K562 (cell line): ENCODE measurements at regions of chr1 and their contacts with region 1.

Region 1: DNA sequence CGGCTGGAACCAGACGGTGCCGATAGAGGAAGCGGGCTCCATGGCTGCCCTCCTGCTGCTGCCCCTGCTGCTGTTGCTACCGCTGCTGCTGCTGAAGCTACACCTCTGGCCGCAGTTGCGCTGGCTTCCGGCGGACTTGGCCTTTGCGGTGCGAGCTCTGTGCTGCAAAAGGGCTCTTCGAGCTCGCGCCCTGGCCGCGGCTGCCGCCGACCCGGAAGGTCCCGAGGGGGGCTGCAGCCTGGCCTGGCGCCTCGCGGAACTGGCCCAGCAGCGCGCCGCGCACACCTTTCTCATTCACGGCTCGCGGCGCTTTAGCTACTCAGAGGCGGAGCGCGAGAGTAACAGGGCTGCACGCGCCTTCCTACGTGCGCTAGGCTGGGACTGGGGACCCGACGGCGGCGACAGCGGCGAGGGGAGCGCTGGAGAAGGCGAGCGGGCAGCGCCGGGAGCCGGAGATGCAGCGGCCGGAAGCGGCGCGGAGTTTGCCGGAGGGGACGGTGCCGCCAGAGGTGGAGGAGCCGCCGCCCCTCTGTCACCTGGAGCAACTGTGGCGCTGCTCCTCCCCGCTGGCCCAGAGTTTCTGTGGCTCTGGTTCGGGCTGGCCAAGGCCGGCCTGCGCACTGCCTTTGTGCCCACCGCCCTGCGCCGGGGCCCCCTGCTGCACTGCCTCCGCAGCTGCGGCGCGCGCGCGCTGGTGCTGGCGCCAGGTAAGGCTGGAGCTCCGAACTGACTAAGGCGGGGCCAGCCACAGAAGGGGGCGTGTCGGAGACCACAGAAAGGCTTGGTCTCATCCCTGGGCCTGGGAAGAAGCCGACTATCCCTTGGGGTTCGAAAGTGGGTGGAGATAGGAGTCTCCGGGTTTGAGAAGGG is 486 bp downstream of the SLC27A3 start:
- DNase-seq: peak in 3 of 4 experiments; percentile 66 to 77 (median 73)
- ATAC-seq: peak; percentile 73
- H3K4me3 ChIP-seq: peak overlapping the region; percentile 48
- H3K27ac ChIP-seq: no peak overlapping the region
- H3K4me1 ChIP-seq: peaks cover 10 to 55% of the 10 kb centered on the region in 2 experiments
- H3K27me3 ChIP-seq: no peaks in the 10 kb centered on the region
- CTCF ChIP-seq: no peak
- EP300 ChIP-seq: no peak
- POLR2A ChIP-seq: no peak
- RAD21 ChIP-seq: no peak

Region 2: DNA sequence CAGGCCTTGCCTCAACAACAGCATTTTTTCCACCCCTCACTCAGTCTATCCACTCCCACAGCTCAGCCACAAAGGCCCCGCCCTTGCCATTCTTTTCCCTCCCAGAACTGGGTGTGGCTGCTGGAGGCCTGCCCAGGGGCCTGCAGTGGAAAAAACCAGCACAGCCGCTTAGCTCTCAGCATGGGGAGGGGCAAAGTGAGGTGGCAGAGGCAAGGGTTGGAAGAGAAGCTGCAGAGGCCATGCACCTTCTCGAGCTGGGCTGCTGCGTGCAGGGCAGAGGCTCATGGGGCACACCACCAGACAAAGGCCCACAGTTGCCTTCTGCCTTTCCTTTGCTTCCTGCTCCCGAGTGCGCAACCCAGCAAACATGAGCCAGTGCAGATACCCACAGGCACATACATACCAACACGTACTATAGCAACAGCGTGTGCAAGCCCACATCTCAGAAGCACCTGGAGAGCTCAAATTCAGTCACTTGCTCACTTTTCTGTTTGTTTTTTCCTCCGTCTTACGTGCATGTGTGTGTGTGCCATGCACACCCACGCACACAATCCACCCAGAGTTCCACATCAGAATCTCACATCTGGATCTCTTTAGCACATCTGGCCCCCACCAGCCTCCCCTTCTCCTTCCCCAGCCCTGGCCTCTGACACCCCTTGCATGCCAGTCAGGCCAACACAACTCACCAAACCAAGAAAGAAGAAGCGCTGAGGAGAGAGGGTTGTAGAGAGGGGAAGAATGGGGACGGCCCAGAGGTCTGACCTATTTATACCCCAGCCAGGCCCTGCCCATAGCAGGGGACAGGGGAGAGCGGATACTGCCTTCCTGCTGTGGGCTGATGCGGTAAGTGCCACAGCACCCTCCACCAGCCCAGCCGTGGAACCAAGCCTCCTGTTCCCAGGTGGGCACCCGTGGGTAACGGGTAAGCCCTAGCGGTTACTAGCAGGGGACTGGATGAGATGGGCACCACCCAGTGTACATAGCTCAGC is 230.3 kb before region 1 on chr1 and contains the start of gene S100A4:
- CTCF ChIA-PET with region 1: no interaction called
- POLR2A ChIA-PET with region 1: no interaction called
- in situ Hi-C with region 1: no loop called
- intact Hi-C with region 1: no loop called
- DNase-seq: peak; percentile 92 to 94 (median 94)
- ATAC-seq: peak; percentile 94
- H3K4me3 ChIP-seq: no peak within 1 kb of the TSS
- H3K27ac ChIP-seq: peak within 1 kb of the TSS; percentile 57
- H3K4me1 ChIP-seq: peaks cover 74 to 79% of the 10 kb centered on the region in 2 experiments
- H3K27me3 ChIP-seq: no peaks in the 10 kb centered on the region
- CTCF ChIP-seq: no peak
- EP300 ChIP-seq: peak; percentile 35; the same call in 1 of the 2 replicates
- POLR2A ChIP-seq: no peak
- RAD21 ChIP-seq: no peak
- polyA plus RNA-seq, gene S100A4: 20.1 TPM

Region 3: DNA sequence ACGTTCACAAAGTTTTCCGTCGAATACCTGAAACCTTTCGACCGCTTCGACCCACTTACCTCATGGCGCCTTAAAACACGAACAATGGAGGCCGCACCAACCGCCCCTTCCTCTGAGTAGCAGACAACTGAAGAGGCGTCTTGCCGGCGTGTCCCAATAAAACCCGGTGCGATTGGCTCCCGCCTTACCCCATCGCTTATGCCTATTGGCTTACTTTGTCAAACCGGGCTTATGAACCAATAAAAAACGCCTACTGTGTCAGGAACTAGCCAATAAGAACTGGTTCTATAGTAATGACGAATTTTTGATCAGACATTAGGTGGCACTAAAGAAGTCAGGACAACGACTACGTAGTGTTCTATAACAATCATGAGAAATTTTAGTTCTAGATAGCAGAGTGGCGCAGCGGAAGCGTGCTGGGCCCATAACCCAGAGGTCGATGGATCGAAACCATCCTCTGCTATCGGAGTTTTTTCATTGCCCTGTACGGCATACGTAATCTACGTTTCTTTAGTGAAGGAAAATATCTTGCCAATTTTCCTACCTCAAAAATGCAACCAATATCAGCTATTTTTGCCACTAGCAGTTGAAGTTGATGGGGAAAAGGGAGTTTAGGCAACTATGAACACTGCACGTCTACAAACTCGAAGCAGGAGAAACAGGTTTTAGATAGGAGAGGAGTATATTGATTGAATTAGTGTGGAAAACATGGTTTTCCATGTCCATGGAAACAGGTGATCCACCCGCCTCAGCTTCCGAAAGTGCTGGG is 104.7 kb before region 1 on chr1 and contains the start of gene ILF2:
- CTCF ChIA-PET with region 1: no interaction called
- POLR2A ChIA-PET with region 1: no interaction called
- in situ Hi-C with region 1: loop called (anchors 5 kb)
- intact Hi-C with region 1: loop called (anchors 5 kb)
- DNase-seq: peak; percentile 97 to 100 (median 98)
- ATAC-seq: peak; percentile 95
- H3K4me3 ChIP-seq: peak within 1 kb of the TSS; percentile 94
- H3K27ac ChIP-seq: peak within 1 kb of the TSS; percentile 92
- H3K4me1 ChIP-seq: peaks cover 0 to 4% of the 10 kb centered on the region in 2 experiments; a peak in 3 of 5 replicates
- H3K27me3 ChIP-seq: no peaks in the 10 kb centered on the region
- CTCF ChIP-seq: peak in 2 of 3 experiments; percentile 61 to 63; a peak in 4 of 6 replicates
- EP300 ChIP-seq: peak; percentile 66; the same call in 1 of the 2 replicates
- POLR2A ChIP-seq: peak; percentile 97
- RAD21 ChIP-seq: no peak; a peak in 1 of 4 replicates
- polyA plus RNA-seq, gene ILF2: 459 to 642 TPM

Region 4: GRCh38 chr1:153677718-153678505 is 97.8 kb before region 1 on chr1:
- CTCF ChIA-PET with region 1: interaction called, 9 read pairs
- POLR2A ChIA-PET with region 1: no interaction called
- in situ Hi-C with region 1: loop called (anchors 5 kb)
- intact Hi-C with region 1: loop called (anchors 5 kb)
- DNase-seq: peak; percentile 54 to 72 (median 62)
- ATAC-seq: peak; percentile 85
- H3K4me3 ChIP-seq: no peak overlapping the region
- H3K27ac ChIP-seq: no peak overlapping the region
- H3K4me1 ChIP-seq: peaks cover 0 to 19% of the 10 kb centered on the region in 2 experiments; a peak in 3 of 5 replicates
- H3K27me3 ChIP-seq: peaks cover 33 to 45% of the 10 kb centered on the region in 2 experiments; a peak in 4 of 5 replicates
- CTCF ChIP-seq: peak; percentile 91 to 95 (median 93)
- EP300 ChIP-seq: no peak
- POLR2A ChIP-seq: no peak
- RAD21 ChIP-seq: peak; percentile 86 to 94